OCI-LY7 (cell line): ENCODE measurements at regions of chr6 and their contacts with region 1.

Region 1: DNA sequence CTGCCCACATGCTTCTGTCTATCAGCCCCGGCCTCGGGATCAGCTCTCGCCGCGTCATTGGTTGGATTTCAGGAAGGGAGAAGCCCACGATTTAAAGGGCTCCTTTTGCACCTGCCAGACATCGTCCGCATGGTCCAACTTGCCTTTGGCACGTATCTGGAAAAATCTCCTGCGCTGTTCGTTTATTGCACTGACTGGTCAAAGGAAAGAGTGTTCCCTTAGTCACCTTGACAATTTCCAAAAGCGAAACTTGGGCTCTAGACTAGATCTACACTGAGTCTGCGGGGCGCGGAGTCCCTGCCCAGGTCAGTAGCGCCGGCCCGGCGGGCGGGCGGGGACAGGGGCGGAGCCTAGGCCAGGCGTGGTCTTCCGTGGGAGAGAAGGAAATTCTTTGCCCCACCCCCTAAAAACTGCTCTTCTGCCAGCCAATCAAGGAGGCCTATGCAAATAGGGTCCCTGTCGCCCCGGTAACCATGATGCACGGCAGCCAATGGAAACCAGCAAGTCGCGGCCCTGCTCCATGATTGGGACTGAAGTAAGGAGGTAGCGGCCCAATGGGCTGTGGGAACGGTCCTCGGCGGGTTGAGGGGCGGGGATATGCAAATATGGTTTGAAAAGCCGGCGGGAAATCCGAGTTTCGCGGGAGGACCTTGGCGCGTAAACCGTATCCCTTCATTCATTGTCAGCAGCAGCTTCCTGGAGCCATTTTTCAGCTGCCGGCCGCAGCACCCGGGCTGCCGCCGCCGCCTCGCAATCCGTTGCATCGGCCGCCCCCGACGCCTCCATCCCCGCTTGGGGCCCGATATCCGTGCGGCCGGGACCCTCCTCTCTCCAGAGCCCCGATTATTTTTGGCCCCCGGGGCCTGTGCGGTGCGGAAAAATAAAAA is at the start of gene E2F3:
- DNase-seq: peak; percentile 100
- H3K4me3 ChIP-seq: peak within 1 kb of the TSS; percentile 93
- H3K27ac ChIP-seq: peak within 1 kb of the TSS; percentile 90
- H3K4me1 ChIP-seq: peaks cover 27% of the 10 kb centered on the region
- CTCF ChIP-seq: no peak
- total RNA-seq, gene E2F3: 12.2 and 12.4 TPM in 2 replicates

Region 2: DNA sequence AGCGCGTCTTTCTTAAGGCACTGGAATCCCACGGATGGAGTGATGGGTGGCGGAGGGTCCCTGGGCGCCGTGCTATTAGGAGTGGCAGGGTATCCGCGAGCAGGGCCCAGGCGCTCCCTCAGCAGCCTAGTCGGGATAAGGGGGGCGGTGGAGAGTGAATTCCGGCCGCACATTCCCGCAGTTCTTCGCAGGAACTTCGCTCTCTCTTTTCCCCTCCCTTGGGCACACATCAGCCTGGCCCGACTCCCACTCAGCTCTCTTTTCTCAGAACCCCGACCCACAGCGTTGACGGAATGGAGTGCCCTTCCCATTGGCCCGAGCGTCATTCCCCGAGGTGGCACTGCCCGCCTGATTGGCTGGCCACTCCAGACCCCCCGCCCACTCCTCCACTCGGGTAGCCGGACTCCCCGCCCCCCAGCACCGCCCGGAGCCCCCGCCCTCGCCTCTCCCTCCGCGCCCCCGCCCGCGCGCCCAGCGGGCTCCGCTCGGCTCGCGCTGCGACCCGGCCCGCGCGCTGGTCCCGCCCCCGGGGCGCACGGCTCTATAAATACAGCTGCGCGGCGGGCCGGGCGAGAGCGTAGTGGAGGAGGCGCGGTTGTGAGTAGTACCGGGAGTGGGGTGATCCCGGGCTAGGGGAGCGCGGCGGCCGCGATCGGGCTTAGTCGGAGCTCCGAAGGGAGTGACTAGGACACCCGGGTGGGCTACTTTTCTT is 564.5 kb before region 1 on chr6 and contains the start of gene ID4:
- CTCF ChIA-PET with region 1: no interaction called
- POLR2A ChIA-PET with region 1: no interaction called
- intact Hi-C with region 1: loop called (anchors 2 kb)
- DNase-seq: no peak
- H3K4me3 ChIP-seq: peak within 1 kb of the TSS; percentile 80
- H3K27ac ChIP-seq: peak within 1 kb of the TSS; percentile 96
- H3K4me1 ChIP-seq: peaks cover 41% of the 10 kb centered on the region
- CTCF ChIP-seq: no peak
- total RNA-seq, gene ID4: 2.0 and 2.1 TPM in 2 replicates

Region 3: GRCh38 chr6:20291764-20292580 is 109.5 kb before region 1 on chr6:
- CTCF ChIA-PET with region 1: no interaction called
- POLR2A ChIA-PET with region 1: interaction called, 4 read pairs
- intact Hi-C with region 1: loop called (anchors 5 kb)
- DNase-seq: peak; percentile 80
- H3K4me3 ChIP-seq: no peak overlapping the region
- H3K27ac ChIP-seq: no peak overlapping the region
- H3K4me1 ChIP-seq: no peaks in the 10 kb centered on the region
- CTCF ChIP-seq: peak; percentile 96

Region 4: GRCh38 chr6:20417819-20418218 is 16.4 kb after region 1 on chr6:
- CTCF ChIA-PET with region 1: no interaction called
- POLR2A ChIA-PET with region 1: interaction called, 13 read pairs
- intact Hi-C with region 1: no loop called
- DNase-seq: no peak
- H3K4me3 ChIP-seq: no peak overlapping the region
- H3K27ac ChIP-seq: no peak overlapping the region
- H3K4me1 ChIP-seq: peaks cover 15% of the 10 kb centered on the region
- CTCF ChIP-seq: no peak

Region 5: DNA sequence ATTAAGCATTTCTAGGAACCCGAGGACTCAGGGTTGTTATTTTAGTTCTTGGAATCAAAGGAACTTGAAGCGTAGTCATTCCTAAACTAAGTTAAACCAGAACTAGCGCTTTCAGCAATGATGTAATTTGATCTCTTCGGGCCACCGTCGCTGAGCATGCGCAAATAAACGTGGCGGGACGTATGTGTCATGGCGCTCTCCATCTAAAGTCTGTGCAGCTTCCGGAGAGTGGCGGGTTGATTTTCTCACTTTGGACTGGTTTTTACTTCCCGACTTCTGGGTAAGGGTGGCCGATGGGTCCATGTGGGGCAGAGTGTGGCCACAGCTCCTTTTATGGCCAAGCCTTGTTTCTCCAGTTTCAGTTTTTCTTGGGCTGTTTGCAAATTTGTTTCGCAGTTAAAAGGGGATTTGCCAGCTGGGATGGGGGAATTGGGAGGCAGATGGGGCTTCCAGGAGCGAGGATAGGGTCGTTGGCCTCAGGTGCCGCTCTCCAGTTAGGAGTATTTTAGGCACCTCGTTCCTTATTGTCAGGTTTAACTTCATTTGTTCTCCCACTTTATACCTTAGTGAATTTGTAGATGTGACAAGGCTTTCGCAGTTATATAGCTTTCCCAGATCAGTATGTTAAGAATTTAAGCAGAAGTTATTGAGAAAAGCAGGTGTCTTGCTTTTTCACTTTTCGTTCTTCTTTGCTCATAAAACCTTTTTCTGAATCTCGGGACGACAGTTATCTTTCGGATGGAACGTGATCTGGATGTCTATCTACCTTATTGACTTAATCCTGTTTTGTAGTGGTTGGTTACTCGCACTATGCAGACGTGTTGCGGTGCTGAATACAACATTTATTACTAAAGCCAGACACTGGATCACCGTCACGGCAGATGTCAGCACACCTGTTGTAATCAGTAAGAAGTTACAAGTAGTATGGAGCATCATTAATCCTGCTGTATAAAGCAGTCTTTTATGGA is 133.1 kb after region 1 on chr6 and contains the start of gene CDKAL1:
- CTCF ChIA-PET with region 1: no interaction called
- POLR2A ChIA-PET with region 1: interaction called, 17 read pairs
- intact Hi-C with region 1: loop called (anchors 1 kb)
- DNase-seq: peak; percentile 92
- H3K4me3 ChIP-seq: peak within 1 kb of the TSS; percentile 94
- H3K27ac ChIP-seq: peak within 1 kb of the TSS; percentile 65
- H3K4me1 ChIP-seq: peaks cover 14% of the 10 kb centered on the region
- CTCF ChIP-seq: no peak
- total RNA-seq, gene CDKAL1: 19.9 and 21.6 TPM in 2 replicates

Region 6: GRCh38 chr6:21593412-21593926 is 1192.0 kb after region 1 on chr6 and contains the start of gene SOX4:
- CTCF ChIA-PET with region 1: interaction called, 3 read pairs
- POLR2A ChIA-PET with region 1: no interaction called
- intact Hi-C with region 1: loop called (anchors 5 kb)
- DNase-seq: peak; percentile 98
- H3K4me3 ChIP-seq: peak within 1 kb of the TSS; percentile 94
- H3K27ac ChIP-seq: peak within 1 kb of the TSS; percentile 67
- H3K4me1 ChIP-seq: peaks cover 29% of the 10 kb centered on the region
- CTCF ChIP-seq: no peak
- total RNA-seq, gene SOX4: 55.2 and 55.3 TPM in 2 replicates